Heart left ventricle (tissue), 16 donors: ENCODE measurements at regions of chr22 and their contacts with region 1.

Region 1: GRCh38 chr22:21938071-21938822 is 14.4 kb downstream of the PPM1F start:
- DNase-seq: peak; percentile 93 to 98 (median 95)
- ATAC-seq: peak; percentile 81 to 91 (median 86)
- H3K4me3 ChIP-seq: peak overlapping the region; percentile 9 to 67 (median 61)
- H3K27ac ChIP-seq: peak overlapping the region; percentile 88 to 98 (median 96)
- H3K4me1 ChIP-seq: peaks cover 34 to 82% (median 72%) of the 10 kb centered on the region in 12 donors
- H3K27me3 ChIP-seq: no peaks in the 10 kb centered on the region
- CTCF ChIP-seq: peak; percentile 89 to 100 (median 96)
- POLR2A ChIP-seq: peak in 1 of 2 donors; percentile 64

Region 2: GRCh38 chr22:21735200-21736076 is 202.8 kb before region 1 on chr22 and contains the start of gene YPEL1:
- intact Hi-C with region 1: loop called in 1 of 10 experiments (anchors 1 kb)
- DNase-seq: peak; percentile 97 to 99 (median 98)
- ATAC-seq: peak; percentile 94 to 99 (median 98)
- H3K4me3 ChIP-seq: peak within 1 kb of the TSS; percentile 42 to 87 (median 70)
- H3K27ac ChIP-seq: peak within 1 kb of the TSS; percentile 41 to 87 (median 74)
- H3K4me1 ChIP-seq: peaks cover 0 to 18% (median 8%) of the 10 kb centered on the region in 12 donors
- H3K27me3 ChIP-seq: no peaks in the 10 kb centered on the region
- CTCF ChIP-seq: peak in 1 of 12 donors; percentile 4
- POLR2A ChIP-seq: peak; percentile 92 to 99
- total RNA-seq, gene YPEL1: 6.3 to 10.0 (median 7.5) TPM

Region 3: DNA sequence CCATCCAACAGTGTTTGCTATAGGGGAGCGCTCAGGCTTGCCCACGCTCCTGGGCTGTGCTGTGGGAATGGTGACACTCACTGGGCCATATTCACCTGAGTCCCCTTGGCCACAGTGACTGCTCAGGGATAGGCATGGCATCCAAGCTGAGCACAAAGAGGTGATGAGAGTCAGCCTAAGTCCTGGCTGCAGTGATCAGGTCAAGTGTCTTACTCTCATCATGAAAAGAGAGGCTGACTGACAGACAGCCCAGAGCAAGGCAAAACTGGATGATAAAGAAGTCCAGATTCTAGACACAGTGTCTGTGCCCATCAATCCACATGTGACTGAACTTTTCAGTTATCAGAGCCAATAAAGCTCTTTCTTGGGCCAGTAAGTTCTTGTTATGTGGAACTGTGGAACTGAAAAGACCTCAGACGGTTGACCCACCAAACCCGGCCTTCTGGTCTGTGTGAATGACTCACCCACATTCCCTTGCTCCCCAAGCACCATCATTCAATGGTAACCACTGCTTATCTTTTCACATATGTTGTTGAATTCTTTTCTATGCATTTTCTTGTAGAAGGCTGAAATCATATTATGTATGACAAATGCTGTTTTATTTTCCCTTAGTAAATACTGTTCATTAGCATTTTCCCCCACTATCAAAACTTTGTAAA is 159.4 kb before region 1 on chr22:
- intact Hi-C with region 1: loop called in 6 of 10 experiments (anchors 2 to 10 kb)
- DNase-seq: no peak
- ATAC-seq: peak in 1 of 4 donors; percentile 33
- H3K4me3 ChIP-seq: no peak overlapping the region
- H3K27ac ChIP-seq: no peak overlapping the region
- H3K4me1 ChIP-seq: peaks cover 0 to 7% (median 2%) of the 10 kb centered on the region in 12 donors
- H3K27me3 ChIP-seq: no peaks in the 10 kb centered on the region
- CTCF ChIP-seq: no peak
- POLR2A ChIP-seq: no peak

Region 4: GRCh38 chr22:21867528-21868266 is 70.5 kb before region 1 on chr22 and contains the start of gene MAPK1:
- intact Hi-C with region 1: loop called in 2 of 10 experiments (anchors 5 kb)
- DNase-seq: peak; percentile 95 to 97 (median 95)
- ATAC-seq: peak; percentile 95 to 99 (median 99)
- H3K4me3 ChIP-seq: peak within 1 kb of the TSS; percentile 81 to 98 (median 90)
- H3K27ac ChIP-seq: peak within 1 kb of the TSS; percentile 74 to 96 (median 88)
- H3K4me1 ChIP-seq: peaks cover 5 to 51% (median 39%) of the 10 kb centered on the region in 12 donors
- H3K27me3 ChIP-seq: no peaks in the 10 kb centered on the region
- CTCF ChIP-seq: peak in 9 of 12 donors; percentile 11 to 67 (median 50)
- POLR2A ChIP-seq: peak in 1 of 2 donors; percentile 88
- total RNA-seq, gene MAPK1: 30.1 to 140 (median 106) TPM

Region 5: DNA sequence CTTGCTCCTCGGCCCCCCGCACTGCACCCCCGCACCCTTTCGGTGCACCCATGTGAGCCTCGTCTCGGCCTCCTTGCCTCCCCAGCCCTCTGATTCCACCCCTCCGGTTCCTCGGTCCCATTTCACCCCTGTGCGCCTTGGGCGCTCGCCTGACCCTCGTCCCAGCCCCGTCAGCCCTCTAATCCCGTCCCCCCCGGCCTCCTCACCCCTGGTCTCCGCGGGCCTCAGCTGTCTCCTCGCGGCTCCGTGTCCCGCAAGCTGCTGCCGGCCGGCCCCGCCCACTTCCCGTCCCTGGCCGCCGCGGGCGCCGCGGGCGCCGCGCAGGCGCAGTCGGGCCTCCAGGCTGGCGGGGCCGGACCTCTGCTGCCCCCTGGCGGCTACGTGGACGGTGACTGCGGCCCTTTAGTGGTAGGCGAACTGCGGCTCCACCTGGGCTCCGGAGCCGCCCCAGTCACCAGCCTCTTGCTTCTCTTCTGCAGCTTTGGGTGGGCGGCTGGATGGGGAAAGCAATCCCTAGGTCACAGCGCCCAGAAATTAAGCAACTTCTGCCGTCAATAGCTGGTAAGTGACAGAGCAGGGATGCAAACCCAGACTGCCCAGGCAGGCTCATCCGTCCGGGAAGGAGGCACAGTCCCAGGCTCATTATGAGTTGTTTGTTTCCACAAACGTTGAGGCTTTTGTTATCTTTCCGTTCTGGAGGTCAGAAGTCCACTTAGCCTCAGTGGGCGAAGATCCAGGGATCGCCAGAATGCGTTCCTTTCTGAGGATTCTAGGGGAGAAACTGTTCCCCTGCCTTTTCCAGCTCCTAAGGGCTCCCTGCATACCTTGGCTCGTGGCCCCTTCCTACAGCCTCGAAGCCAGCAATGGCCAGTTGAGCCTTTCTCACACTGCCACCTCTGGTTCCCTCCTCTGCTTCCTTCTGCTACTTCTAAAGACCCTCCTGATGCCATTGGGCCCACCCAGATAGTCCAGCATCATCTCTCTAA is 14.6 kb after region 1 on chr22 and contains the start of gene PPM1F:
- intact Hi-C with region 1: loop called in 3 of 10 experiments (anchors 1 to 2 kb)
- DNase-seq: peak; percentile 85 to 94 (median 91)
- ATAC-seq: peak; percentile 39 to 90 (median 81)
- H3K4me3 ChIP-seq: peak within 1 kb of the TSS; percentile 48 to 90 (median 74)
- H3K27ac ChIP-seq: peak within 1 kb of the TSS; percentile 25 to 98 (median 82)
- H3K4me1 ChIP-seq: peaks cover 0 to 48% (median 39%) of the 10 kb centered on the region in 12 donors
- H3K27me3 ChIP-seq: no peaks in the 10 kb centered on the region
- CTCF ChIP-seq: peak; percentile 70 to 96 (median 88)
- POLR2A ChIP-seq: peak in 1 of 2 donors; percentile 72
- total RNA-seq, gene PPM1F: 13.9 to 51.1 (median 21.1) TPM